Naive thymus-derived CD4-positive, alpha-beta T cell (primary cell): ENCODE measurements at regions of chr1 and their contacts with region 1.

Region 1: DNA sequence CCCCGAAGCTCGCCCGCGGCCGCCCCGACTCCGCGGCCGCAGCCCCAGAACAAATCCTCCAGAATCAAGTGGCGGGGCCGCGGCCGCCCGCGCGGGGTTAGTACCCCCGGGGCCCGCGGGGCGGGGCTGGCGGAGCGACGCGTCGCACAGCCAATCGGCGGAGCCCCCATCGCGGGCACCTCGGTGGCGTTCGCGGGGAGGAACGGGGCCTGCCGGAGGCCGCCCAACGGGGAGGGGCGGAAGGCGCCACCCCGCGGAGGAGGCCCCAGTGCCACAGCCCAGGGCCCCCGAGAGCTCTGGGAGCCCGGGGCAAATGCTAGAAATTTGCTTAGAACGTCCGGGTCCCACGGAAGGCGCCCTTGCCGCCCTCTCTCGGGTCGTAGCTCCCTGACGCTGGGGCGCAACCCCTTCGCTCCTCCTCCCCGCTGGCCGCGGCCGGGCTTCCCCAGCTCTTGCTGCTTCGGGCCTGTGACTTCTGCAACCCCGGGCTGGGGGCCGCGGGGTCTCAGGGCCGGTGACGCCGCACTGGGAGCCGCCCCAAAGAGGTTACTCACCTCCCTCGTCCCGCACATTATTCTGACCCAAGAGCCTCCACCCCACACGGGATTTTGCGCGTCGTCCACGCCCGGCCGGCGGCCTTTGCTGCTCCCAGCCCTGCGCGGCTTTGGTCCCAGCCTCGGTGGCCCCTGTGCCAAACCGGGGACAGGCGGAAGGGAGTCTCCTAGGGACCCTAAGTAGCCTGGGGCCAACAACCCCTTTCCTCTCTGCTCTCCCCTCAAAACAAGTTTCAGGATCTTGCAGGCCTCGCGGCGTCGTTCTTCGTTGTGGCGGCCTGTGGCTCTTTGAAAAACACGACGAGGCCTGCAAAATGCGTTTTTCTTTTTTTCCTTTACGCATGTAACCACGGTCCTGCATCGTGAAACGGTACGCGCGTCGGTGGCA is at the start of gene RUNX3:
- DNase-seq: peak; percentile 87 to 94 (median 92)
- ATAC-seq: peak; percentile 90
- H3K4me3 ChIP-seq: peak within 1 kb of the TSS; percentile 91
- H3K4me3 Mint-ChIP-seq: peak within 1 kb of the TSS; percentile 85 to 98 (median 96)
- H3K27ac ChIP-seq: peak within 1 kb of the TSS; percentile 96
- H3K27ac Mint-ChIP-seq: peak within 1 kb of the TSS; percentile 71 to 98 (median 97)
- H3K4me1 ChIP-seq: peaks cover 37 to 44% of the 10 kb centered on the region in 2 donors
- H3K4me1 Mint-ChIP-seq: peaks cover 21 to 65% (median 51%) of the 10 kb centered on the region in 7 donors
- H3K27me3 ChIP-seq: no peaks in the 10 kb centered on the region
- H3K27me3 Mint-ChIP-seq: no peaks in the 10 kb centered on the region
- total RNA-seq, gene RUNX3: 71.4 to 135 (median 96.9) TPM

Region 2: GRCh38 chr1:24744911-24745710 is 185.4 kb before region 1 on chr1 and contains the start of gene CLIC4:
- CTCF ChIA-PET with region 1: no interaction called
- POLR2A ChIA-PET with region 1: interaction called, 3 read pairs
- intact Hi-C with region 1: loop called (anchors 1 to 2 kb)
- DNase-seq: peak; percentile 97 to 100 (median 98)
- ATAC-seq: peak; percentile 97
- H3K4me3 ChIP-seq: peak within 1 kb of the TSS; percentile 55
- H3K4me3 Mint-ChIP-seq: peak within 1 kb of the TSS; percentile 84 to 94 (median 89)
- H3K27ac ChIP-seq: peak within 1 kb of the TSS; percentile 57
- H3K27ac Mint-ChIP-seq: peak within 1 kb of the TSS; percentile 18 to 89 (median 79)
- H3K4me1 ChIP-seq: peaks cover 0 to 4% of the 10 kb centered on the region in 2 donors
- H3K4me1 Mint-ChIP-seq: peaks cover 7 to 57% (median 15%) of the 10 kb centered on the region in 7 donors
- H3K27me3 ChIP-seq: no peaks in the 10 kb centered on the region
- H3K27me3 Mint-ChIP-seq: peaks cover 0 to 10% (median 0%) of the 10 kb centered on the region in 5 donors
- total RNA-seq, gene CLIC4: 1.4 to 16.8 (median 5.1) TPM

Region 3: GRCh38 chr1:24955161-24955560 is 24.7 kb after region 1 on chr1:
- CTCF ChIA-PET with region 1: interaction called, 15 read pairs
- POLR2A ChIA-PET with region 1: interaction called, 5 read pairs
- intact Hi-C with region 1: loop called (anchors 1 to 2 kb)
- DNase-seq: peak in 1 of 9 donors; percentile 75
- ATAC-seq: peak; percentile 88
- H3K4me3 ChIP-seq: no peak overlapping the region
- H3K4me3 Mint-ChIP-seq: peak overlapping the region; percentile 32 to 87 (median 66)
- H3K27ac ChIP-seq: no peak overlapping the region
- H3K27ac Mint-ChIP-seq: peak overlapping the region; percentile 56 to 92 (median 83)
- H3K4me1 ChIP-seq: peaks cover 56 to 57% of the 10 kb centered on the region in 2 donors
- H3K4me1 Mint-ChIP-seq: peaks cover 45 to 90% (median 80%) of the 10 kb centered on the region in 7 donors
- H3K27me3 ChIP-seq: no peaks in the 10 kb centered on the region
- H3K27me3 Mint-ChIP-seq: no peaks in the 10 kb centered on the region

Region 4: DNA sequence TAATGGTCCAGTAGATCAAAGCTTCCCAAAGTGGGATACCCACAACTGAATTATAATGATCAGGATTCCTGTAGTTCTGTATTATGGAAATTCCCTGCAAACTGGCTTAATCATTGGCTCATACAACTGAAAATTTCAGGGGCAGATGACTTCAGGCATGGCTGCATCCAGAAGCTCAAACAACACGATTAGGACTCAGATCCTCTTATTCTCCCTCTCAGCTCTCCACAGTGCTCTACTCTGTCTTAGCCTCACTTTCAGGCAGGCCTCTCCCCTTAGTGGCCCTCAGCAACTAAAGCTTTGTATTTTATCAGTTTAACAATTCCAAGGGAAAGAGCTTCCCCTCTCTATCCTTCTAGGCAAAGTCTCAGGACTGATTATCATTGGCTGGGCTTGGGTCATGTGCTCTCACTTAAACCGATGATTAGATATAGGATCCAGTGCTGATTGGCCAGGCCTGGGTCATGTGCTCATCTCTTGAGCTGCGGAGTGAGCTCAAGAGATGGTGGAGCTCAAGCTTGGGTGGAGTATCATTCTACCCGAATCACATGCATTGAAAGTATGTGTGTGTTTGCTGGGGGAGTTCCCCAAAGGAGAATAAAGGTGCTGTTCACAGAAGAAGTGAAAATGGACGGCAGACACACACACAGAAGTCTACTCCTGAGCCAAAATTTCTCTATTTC is 57.5 kb after region 1 on chr1:
- CTCF ChIA-PET with region 1: interaction called, 5 read pairs
- POLR2A ChIA-PET with region 1: interaction called, 14 read pairs
- intact Hi-C with region 1: no loop called
- DNase-seq: no peak
- ATAC-seq: peak; percentile 78
- H3K4me3 ChIP-seq: no peak overlapping the region
- H3K4me3 Mint-ChIP-seq: peak overlapping the region in 8 of 10 donors; percentile 6 to 80 (median 58)
- H3K27ac ChIP-seq: no peak overlapping the region
- H3K27ac Mint-ChIP-seq: peak overlapping the region; percentile 49 to 100 (median 81)
- H3K4me1 ChIP-seq: peaks cover 66 to 96% of the 10 kb centered on the region in 2 donors
- H3K4me1 Mint-ChIP-seq: peaks cover 78 to 99% (median 92%) of the 10 kb centered on the region in 7 donors
- H3K27me3 ChIP-seq: no peaks in the 10 kb centered on the region
- H3K27me3 Mint-ChIP-seq: peaks cover 0 to 10% (median 0%) of the 10 kb centered on the region in 5 donors

Region 5: DNA sequence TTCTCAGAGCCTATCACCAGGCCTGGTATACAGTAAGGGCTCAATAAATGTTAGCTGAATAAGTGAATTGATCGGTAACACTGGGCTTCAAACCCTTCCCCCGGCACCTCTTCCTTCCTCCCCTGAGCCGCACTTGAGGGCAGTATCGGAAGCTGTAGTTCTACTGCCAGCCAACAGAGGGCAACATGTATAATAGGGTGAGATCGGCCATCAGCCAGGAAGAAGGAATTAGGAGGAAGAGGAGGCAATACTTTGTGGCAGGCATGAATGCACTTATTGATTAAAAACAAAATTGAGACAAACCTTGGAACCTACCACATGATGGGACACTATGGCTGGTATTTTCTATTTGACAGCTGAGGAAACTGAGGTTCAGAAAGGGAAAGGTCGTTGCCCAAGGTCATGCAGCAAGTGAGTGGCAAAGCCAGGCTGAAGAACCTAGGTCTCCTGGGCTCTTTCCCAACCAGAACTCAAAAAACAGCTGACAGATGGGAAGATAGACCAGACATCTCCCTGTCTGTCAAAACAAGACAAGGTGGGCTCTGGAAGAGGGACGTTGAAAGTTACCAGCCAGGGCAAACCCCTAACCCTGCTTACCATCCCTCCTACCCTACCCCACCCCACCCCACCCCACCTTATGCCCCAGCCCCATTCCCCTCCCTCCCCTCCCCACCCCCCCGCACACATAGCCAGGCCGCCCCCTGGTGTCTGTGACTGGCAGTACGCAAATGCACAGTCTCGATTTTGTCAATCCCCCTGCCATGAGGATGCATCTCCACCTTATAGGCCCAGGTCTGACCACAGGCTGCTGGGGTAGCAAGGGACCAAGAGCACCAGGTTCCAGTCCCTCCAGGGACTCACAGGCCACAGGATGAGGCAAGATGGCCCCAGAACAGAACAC is 106.9 kb after region 1 on chr1:
- CTCF ChIA-PET with region 1: interaction called, 135 read pairs
- POLR2A ChIA-PET with region 1: interaction called, 24 read pairs
- intact Hi-C with region 1: loop called (anchors 1 kb)
- DNase-seq: peak; percentile 39 to 70 (median 56)
- ATAC-seq: peak; percentile 58
- H3K4me3 ChIP-seq: no peak overlapping the region
- H3K4me3 Mint-ChIP-seq: peak overlapping the region in 9 of 10 donors; percentile 1 to 44 (median 17)
- H3K27ac ChIP-seq: no peak overlapping the region
- H3K27ac Mint-ChIP-seq: peak overlapping the region in 8 of 9 donors; percentile 34 to 74 (median 54)
- H3K4me1 ChIP-seq: peaks cover 43 to 57% of the 10 kb centered on the region in 2 donors
- H3K4me1 Mint-ChIP-seq: peaks cover 28 to 42% (median 33%) of the 10 kb centered on the region in 7 donors
- H3K27me3 ChIP-seq: no peaks in the 10 kb centered on the region
- H3K27me3 Mint-ChIP-seq: peaks cover 0 to 12% (median 0%) of the 10 kb centered on the region in 5 donors

Region 6: GRCh38 chr1:25572708-25573600 is 642.5 kb after region 1 on chr1:
- CTCF ChIA-PET with region 1: no interaction called
- POLR2A ChIA-PET with region 1: no interaction called
- intact Hi-C with region 1: loop called in 1 of 2 experiments (anchors 10 kb)
- DNase-seq: peak in 7 of 9 donors; percentile 42 to 54 (median 49)
- ATAC-seq: peak; percentile 80
- H3K4me3 ChIP-seq: no peak overlapping the region
- H3K4me3 Mint-ChIP-seq: peak overlapping the region in 7 of 10 donors; percentile 7 to 43 (median 29)
- H3K27ac ChIP-seq: peak overlapping the region; percentile 24
- H3K27ac Mint-ChIP-seq: peak overlapping the region in 8 of 9 donors; percentile 71 to 92 (median 79)
- H3K4me1 ChIP-seq: peaks cover 8 to 28% of the 10 kb centered on the region in 2 donors
- H3K4me1 Mint-ChIP-seq: peaks cover 11 to 73% (median 58%) of the 10 kb centered on the region in 7 donors
- H3K27me3 ChIP-seq: no peaks in the 10 kb centered on the region
- H3K27me3 Mint-ChIP-seq: no peaks in the 10 kb centered on the region